Ascending aorta (tissue), 2 donors: ENCODE measurements at regions of chr5 and their contacts with region 1.

Region 1: DNA sequence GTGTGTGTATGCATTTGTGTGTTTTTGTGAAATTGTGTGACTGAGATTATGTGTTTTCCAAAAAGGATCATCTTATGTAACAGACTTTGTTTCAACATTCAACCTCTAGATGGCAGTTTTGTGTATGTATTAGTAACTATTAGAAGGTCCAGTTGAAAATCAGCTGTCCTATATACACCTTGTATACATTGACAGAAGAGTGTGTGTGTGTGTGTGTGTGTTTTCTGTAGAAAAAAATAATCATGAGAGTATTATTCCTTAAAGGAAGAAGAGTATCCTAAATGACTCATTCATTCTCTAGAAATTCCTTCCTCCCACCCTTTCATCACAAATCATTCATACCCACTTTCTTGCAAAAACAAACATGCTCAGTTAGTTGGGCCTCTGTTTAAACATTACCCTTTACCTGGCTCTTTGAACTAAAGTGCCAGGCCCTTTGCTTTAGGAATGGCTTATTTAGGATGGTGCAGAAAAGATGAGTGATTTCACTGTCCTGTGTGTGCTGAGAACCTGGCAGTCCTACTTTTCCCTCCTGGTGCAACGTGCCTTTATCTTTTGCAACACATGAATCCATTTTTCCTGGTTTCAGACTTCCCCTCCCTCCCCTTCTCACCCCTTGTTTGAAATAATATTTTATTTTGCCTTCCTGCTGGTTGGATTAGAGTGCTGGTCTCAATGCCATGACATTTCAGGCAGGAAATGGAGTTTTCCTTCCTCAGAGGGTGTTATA is 152.2 kb downstream of the ARHGAP26 start:
- DNase-seq: no peak
- H3K4me3 ChIP-seq: no peak overlapping the region
- H3K27ac ChIP-seq: no peak overlapping the region
- H3K4me1 ChIP-seq: no peaks in the 10 kb centered on the region
- H3K27me3 ChIP-seq: no peaks in the 10 kb centered on the region
- CTCF ChIP-seq: peak; percentile 28 to 51 (median 34)

Region 2: DNA sequence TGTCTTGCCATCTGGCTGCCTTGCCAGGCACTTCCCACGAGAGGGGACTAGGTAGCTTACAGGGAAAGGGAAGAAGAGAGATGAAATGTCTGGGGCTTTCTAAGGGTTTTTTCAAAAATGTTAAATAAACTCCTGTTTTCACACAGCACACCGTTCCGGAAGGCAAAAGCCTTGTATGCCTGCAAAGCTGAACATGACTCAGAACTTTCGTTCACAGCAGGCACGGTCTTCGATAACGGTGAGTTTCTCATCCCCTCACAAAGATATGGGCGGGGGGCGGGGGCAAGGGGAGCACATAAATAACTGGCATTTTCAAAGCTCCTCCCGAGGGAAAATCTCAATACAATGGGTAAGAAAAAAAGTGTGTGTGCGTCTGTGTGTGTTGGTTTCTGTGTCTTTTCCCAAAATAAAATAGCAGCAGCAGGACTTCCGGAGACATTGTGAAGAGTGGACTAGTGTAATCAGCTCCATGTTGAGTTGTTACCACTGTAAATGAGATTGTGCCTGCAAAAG is 291.5 kb after region 1 on chr5:
- intact Hi-C with region 1: no loop called
- DNase-seq: no peak
- H3K4me3 ChIP-seq: no peak overlapping the region
- H3K27ac ChIP-seq: no peak overlapping the region
- H3K4me1 ChIP-seq: peaks cover 0 to 3% of the 10 kb centered on the region in 2 donors
- H3K27me3 ChIP-seq: no peaks in the 10 kb centered on the region
- CTCF ChIP-seq: no peak

Region 3: GRCh38 chr5:144187699-144188294 is 1265.4 kb after region 1 on chr5:
- intact Hi-C with region 1: loop called (anchors 10 kb)
- DNase-seq: peak; percentile 9 to 67
- H3K4me3 ChIP-seq: no peak overlapping the region
- H3K27ac ChIP-seq: no peak overlapping the region
- H3K4me1 ChIP-seq: peaks cover 0 to 2% of the 10 kb centered on the region in 2 donors
- H3K27me3 ChIP-seq: no peaks in the 10 kb centered on the region
- CTCF ChIP-seq: no peak